GM12878 (cell line): ENCODE measurements at regions of chr3 and their contacts with region 1.

Region 1: DNA sequence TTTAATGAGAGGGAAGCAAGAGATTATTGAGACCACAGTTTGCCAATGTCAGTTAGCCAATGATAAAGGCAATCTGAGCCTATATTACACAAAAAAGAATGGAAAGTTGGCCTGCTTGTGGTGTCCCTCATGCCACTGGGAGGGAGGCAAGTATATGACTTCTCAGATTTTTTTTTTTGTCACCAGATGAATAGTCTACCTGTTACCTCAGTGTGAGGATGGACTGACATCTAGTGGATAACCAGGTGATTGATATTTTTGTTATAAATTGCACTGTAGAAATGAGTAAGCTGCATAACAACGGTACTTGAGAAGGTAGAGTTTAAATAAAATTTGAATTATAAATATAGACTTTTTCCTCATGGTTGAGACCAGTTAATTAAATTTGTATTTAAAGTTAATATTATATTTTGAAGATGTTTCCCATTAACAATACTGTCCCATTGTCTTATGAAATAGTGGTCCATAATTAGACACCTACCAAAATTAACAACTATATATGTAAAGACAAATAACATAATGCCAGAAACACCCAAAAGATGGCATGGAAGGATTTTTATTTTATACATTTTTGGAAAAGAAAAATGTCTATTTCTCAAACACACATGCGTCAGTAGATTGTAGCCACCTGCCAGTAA is 237.8 kb upstream of the GADL1 start:
- DNase-seq: peak; percentile 21
- ATAC-seq: peak; percentile 78
- H3K4me3 ChIP-seq: no peak overlapping the region
- H3K27ac ChIP-seq: no peak overlapping the region
- H3K4me1 ChIP-seq: no peaks in the 10 kb centered on the region
- H3K27me3 ChIP-seq: no peaks in the 10 kb centered on the region
- CTCF ChIP-seq: peak; percentile 28 to 50 (median 39); a peak in 4 of 6 replicates
- EP300 ChIP-seq: no peak
- POLR2A ChIP-seq: no peak
- RAD21 ChIP-seq: peak; percentile 86

Region 2: DNA sequence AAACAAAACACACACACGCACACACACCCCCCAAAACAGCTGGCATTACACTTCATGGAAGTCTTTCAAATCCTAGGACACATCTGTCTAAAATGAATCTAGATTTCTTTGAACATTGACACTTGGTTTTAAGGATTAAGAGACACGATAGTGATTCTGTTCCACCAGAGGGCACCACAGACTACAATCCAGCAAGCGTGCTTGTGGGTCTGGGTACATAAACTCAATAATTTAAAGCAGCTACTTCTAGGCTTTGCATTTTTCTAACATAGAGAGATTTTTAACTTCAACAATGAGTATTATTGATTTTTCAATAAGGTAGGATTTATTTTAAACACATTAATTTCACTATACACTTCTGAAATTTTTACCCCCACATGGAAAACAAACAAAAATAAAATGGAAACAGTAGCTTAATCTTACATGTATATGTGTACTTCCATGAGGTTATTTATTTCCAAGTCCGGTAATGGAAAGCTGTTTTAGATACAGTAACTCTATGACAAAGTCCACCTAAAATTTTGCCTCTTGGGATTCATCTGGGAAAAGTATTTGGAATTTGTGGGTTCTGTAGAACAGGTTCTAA is 1089.9 kb before region 1 on chr3:
- CTCF ChIA-PET with region 1: no interaction called
- POLR2A ChIA-PET with region 1: no interaction called
- RAD21 ChIA-PET with region 1: no interaction called
- SMC1A ChIA-PET with region 1: no interaction called
- in situ Hi-C with region 1: no loop called
- intact Hi-C with region 1: loop called (anchors 5 kb)
- DNase-seq: peak; percentile 1
- ATAC-seq: peak; percentile 88
- H3K4me3 ChIP-seq: no peak overlapping the region
- H3K27ac ChIP-seq: no peak overlapping the region
- H3K4me1 ChIP-seq: no peaks in the 10 kb centered on the region
- H3K27me3 ChIP-seq: no peaks in the 10 kb centered on the region
- CTCF ChIP-seq: peak; percentile 57 to 68 (median 59); a peak in 5 of 6 replicates
- EP300 ChIP-seq: no peak
- POLR2A ChIP-seq: no peak
- RAD21 ChIP-seq: peak; percentile 71

Region 3: GRCh38 chr3:30548600-30548999 is 583.7 kb before region 1 on chr3:
- CTCF ChIA-PET with region 1: no interaction called
- POLR2A ChIA-PET with region 1: no interaction called
- RAD21 ChIA-PET with region 1: no interaction called
- SMC1A ChIA-PET with region 1: no interaction called
- in situ Hi-C with region 1: no loop called
- intact Hi-C with region 1: no loop called
- DNase-seq: no peak
- ATAC-seq: peak; percentile 86
- H3K4me3 ChIP-seq: no peak overlapping the region
- H3K27ac ChIP-seq: no peak overlapping the region
- H3K4me1 ChIP-seq: no peaks in the 10 kb centered on the region
- H3K27me3 ChIP-seq: no peaks in the 10 kb centered on the region; a peak in 1 of 4 replicates
- CTCF ChIP-seq: no peak
- EP300 ChIP-seq: no peak
- POLR2A ChIP-seq: no peak
- RAD21 ChIP-seq: no peak

Region 4: GRCh38 chr3:30924763-30925162 is 207.5 kb before region 1 on chr3:
- CTCF ChIA-PET with region 1: interaction called, 3 read pairs
- POLR2A ChIA-PET with region 1: no interaction called
- RAD21 ChIA-PET with region 1: no interaction called
- SMC1A ChIA-PET with region 1: interaction called, 3 read pairs
- in situ Hi-C with region 1: no loop called
- intact Hi-C with region 1: loop called (anchors 5 kb)
- DNase-seq: no peak
- ATAC-seq: no peak
- H3K4me3 ChIP-seq: no peak overlapping the region
- H3K27ac ChIP-seq: no peak overlapping the region
- H3K4me1 ChIP-seq: no peaks in the 10 kb centered on the region
- H3K27me3 ChIP-seq: no peaks in the 10 kb centered on the region
- CTCF ChIP-seq: no peak
- EP300 ChIP-seq: no peak
- POLR2A ChIP-seq: no peak
- RAD21 ChIP-seq: no peak

Region 5: GRCh38 chr3:30970183-30970582 is 162.1 kb before region 1 on chr3:
- CTCF ChIA-PET with region 1: interaction called, 13 read pairs
- POLR2A ChIA-PET with region 1: no interaction called
- RAD21 ChIA-PET with region 1: interaction called, 4 read pairs
- SMC1A ChIA-PET with region 1: interaction called, 6 read pairs
- in situ Hi-C with region 1: no loop called
- intact Hi-C with region 1: no loop called
- DNase-seq: no peak
- ATAC-seq: peak; percentile 46; the same call in 1 of the 3 replicates
- H3K4me3 ChIP-seq: no peak overlapping the region
- H3K27ac ChIP-seq: no peak overlapping the region
- H3K4me1 ChIP-seq: no peaks in the 10 kb centered on the region
- H3K27me3 ChIP-seq: no peaks in the 10 kb centered on the region
- CTCF ChIP-seq: peak; percentile 15 to 46 (median 24); a peak in 4 of 6 replicates
- EP300 ChIP-seq: no peak
- POLR2A ChIP-seq: no peak
- RAD21 ChIP-seq: peak; percentile 49; the same call in 1 of the 2 replicates

Region 6: GRCh38 chr3:31448035-31448881 is 316.0 kb after region 1 on chr3:
- CTCF ChIA-PET with region 1: no interaction called
- POLR2A ChIA-PET with region 1: interaction called, 4 read pairs
- RAD21 ChIA-PET with region 1: interaction called, 3 read pairs
- SMC1A ChIA-PET with region 1: no interaction called
- in situ Hi-C with region 1: no loop called
- intact Hi-C with region 1: loop called (anchors 2 kb)
- DNase-seq: no peak
- ATAC-seq: peak; percentile 96
- H3K4me3 ChIP-seq: 0 out of 2 replicates have a peak overlapping the region, but pooled peaks have one; percentile 42
- H3K27ac ChIP-seq: peak overlapping the region; percentile 79
- H3K4me1 ChIP-seq: peaks cover 34% of the 10 kb centered on the region
- H3K27me3 ChIP-seq: no peaks in the 10 kb centered on the region
- CTCF ChIP-seq: peak; percentile 43 to 73 (median 67)
- EP300 ChIP-seq: no peak
- POLR2A ChIP-seq: no peak
- RAD21 ChIP-seq: peak; percentile 71